WTC11 (cell line): ENCODE measurements at regions of chr12 and their contacts with region 1.

Region 1: GRCh38 chr12:56206457-56207166 is 15.1 kb downstream of the RNF41 start:
- DNase-seq: peak; percentile 83
- ATAC-seq: peak; percentile 96
- H3K4me3 Mint-ChIP-seq: no peak overlapping the region
- H3K27ac Mint-ChIP-seq: peak overlapping the region; percentile 90
- H3K4me1 Mint-ChIP-seq: no peaks in the 10 kb centered on the region
- H3K27me3 Mint-ChIP-seq: no peaks in the 10 kb centered on the region
- CTCF ChIP-seq: no peak; the same call in 1 of the 2 replicates

Region 2: GRCh38 chr12:56230432-56231183 is 24.0 kb after region 1 on chr12:
- CTCF ChIA-PET with region 1: interaction called, 18 read pairs
- POLR2A ChIA-PET with region 1: no interaction called
- DNase-seq: peak; percentile 24
- ATAC-seq: peak; percentile 38
- H3K4me3 Mint-ChIP-seq: no peak overlapping the region
- H3K27ac Mint-ChIP-seq: no peak overlapping the region
- H3K4me1 Mint-ChIP-seq: peaks cover 6% of the 10 kb centered on the region; the same call in 1 of the 2 replicates
- H3K27me3 Mint-ChIP-seq: peaks cover 28% of the 10 kb centered on the region
- CTCF ChIP-seq: no peak

Region 3: GRCh38 chr12:56258057-56258819 is 51.6 kb after region 1 on chr12 and contains the start of gene ANKRD52:
- CTCF ChIA-PET with region 1: interaction called, 32 read pairs
- POLR2A ChIA-PET with region 1: no interaction called
- DNase-seq: peak; percentile 76
- ATAC-seq: peak; percentile 74
- H3K4me3 Mint-ChIP-seq: peak within 1 kb of the TSS; percentile 95
- H3K27ac Mint-ChIP-seq: peak within 1 kb of the TSS; percentile 92
- H3K4me1 Mint-ChIP-seq: peaks cover 18% of the 10 kb centered on the region
- H3K27me3 Mint-ChIP-seq: 0 out of 2 replicates have a peak, but pooled peaks cover 4% of the 10 kb centered on the region
- CTCF ChIP-seq: peak; percentile 61
- total RNA-seq, gene ANKRD52: 33.0 to 41.2 TPM (median 38.6 TPM) in 3 replicates

Region 4: DNA sequence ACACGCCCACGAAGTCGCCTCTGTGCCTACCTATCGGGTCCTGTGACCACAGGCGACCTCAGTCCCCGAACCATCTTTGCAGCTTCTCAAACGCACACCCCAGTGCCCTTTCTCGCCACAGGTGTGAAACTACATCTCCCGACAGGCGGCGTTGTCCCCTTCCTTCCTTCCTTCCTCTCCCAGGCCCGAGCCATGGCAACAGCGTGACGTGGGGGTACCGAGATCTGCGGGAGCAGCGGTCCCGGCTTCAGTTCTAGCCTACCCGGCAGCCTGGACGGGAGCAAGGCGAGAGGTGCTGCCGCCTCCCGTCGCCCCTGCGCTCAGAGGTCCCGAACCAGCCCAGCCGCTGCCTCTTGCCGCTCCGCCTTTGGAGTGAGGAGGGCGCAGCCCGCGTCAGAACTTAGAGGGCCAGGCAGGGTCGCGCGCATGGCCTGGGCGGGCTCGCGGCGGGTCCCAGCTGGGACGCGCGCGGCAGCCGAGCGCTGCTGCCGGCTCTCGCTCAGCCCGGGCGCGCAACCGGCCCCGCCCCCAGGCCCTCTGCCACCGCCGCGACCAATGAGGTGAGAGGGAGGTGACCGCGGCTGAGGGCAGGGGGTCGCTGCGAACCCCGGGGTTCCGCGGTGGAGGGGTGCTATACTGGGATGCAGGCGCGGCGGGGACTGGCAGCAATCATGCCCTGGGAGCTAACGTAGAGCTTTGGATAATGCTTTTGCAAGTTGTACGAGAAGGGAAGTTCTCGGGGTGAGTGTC is 60.3 kb after region 1 on chr12 and contains the start of gene COQ10A:
- CTCF ChIA-PET with region 1: interaction called, 10 read pairs
- POLR2A ChIA-PET with region 1: no interaction called
- DNase-seq: peak; percentile 92
- ATAC-seq: peak; percentile 87
- H3K4me3 Mint-ChIP-seq: peak within 1 kb of the TSS; percentile 84
- H3K27ac Mint-ChIP-seq: peak within 1 kb of the TSS; percentile 97
- H3K4me1 Mint-ChIP-seq: peaks cover 14% of the 10 kb centered on the region
- H3K27me3 Mint-ChIP-seq: no peaks in the 10 kb centered on the region
- CTCF ChIP-seq: no peak
- total RNA-seq, gene COQ10A: 22.7 to 26.2 TPM (median 24.4 TPM) in 3 replicates

Region 5: GRCh38 chr12:56288456-56289387 is 82.1 kb after region 1 on chr12:
- CTCF ChIA-PET with region 1: no interaction called
- POLR2A ChIA-PET with region 1: no interaction called
- DNase-seq: no peak
- ATAC-seq: no peak
- H3K4me3 Mint-ChIP-seq: no peak overlapping the region
- H3K27ac Mint-ChIP-seq: no peak overlapping the region
- H3K4me1 Mint-ChIP-seq: peaks cover 9% of the 10 kb centered on the region
- H3K27me3 Mint-ChIP-seq: no peaks in the 10 kb centered on the region
- CTCF ChIP-seq: no peak

Region 6: DNA sequence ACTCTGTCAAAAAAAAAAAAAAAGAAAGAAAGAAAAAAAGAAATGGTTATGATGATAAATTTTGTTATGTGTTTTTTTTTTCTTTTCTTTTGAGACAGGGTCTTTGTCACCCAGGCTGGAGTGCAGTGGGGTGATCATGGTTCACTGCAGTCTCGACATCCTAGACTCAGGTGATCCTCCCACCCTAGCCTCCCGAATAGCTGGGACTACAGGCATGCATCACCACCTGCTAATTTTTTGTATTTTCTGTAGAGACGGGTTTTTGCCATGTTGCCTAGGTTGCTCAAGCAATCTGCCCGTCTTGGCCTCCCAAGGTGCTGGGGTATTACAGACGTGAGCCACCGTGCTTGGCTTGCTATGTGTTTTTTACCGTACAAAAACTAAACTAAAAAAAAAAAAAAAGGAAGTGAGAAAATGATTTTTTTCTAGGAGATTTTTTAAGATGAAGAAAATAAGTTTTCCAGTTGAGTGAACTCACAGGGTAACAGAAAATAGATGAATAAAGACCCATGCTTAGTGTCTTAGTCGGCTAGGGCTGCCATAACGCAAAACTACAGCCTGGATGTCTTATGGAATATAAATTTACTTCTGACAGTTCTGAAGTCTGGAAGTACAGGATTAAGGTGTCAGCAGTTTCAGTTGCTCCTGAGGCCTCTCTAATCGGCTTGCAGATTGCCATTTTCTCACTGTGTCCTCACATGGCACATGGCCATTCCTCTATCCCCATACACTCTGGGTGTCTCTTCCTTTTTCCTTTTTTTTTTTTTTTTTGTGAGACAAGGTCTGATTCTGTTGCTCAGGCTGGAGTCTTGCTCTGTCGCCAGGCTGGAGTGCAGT is 169.2 kb after region 1 on chr12:
- CTCF ChIA-PET with region 1: no interaction called
- POLR2A ChIA-PET with region 1: no interaction called
- DNase-seq: no peak
- ATAC-seq: no peak
- H3K4me3 Mint-ChIP-seq: no peak overlapping the region
- H3K27ac Mint-ChIP-seq: no peak overlapping the region
- H3K4me1 Mint-ChIP-seq: peaks cover 7% of the 10 kb centered on the region
- H3K27me3 Mint-ChIP-seq: peaks cover 7% of the 10 kb centered on the region
- CTCF ChIP-seq: no peak